A673 (cell line): ENCODE measurements at regions of chr5 and their contacts with region 1.

Region 1: GRCh38 chr5:103119765-103120606 is at the starts of genes GIN1 and PPIP5K2:
- DNase-seq: peak; percentile 99
- H3K4me3 ChIP-seq: peak within 1 kb of the TSS; percentile 78
- H3K27ac ChIP-seq: peak within 1 kb of the TSS; percentile 94
- H3K4me1 ChIP-seq: no peaks in the 10 kb centered on the region
- H3K27me3 ChIP-seq: no peaks in the 10 kb centered on the region
- CTCF ChIP-seq: no peak
- total RNA-seq, gene GIN1: 8.0 and 12.5 TPM in 2 replicates
- total RNA-seq, gene PPIP5K2: 71.8 and 75.6 TPM in 2 replicates

Region 2: GRCh38 chr5:102596113-102596512 is 523.9 kb before region 1 on chr5:
- CTCF ChIA-PET with region 1: no interaction called
- POLR2A ChIA-PET with region 1: no interaction called
- intact Hi-C with region 1: no loop called
- DNase-seq: no peak
- H3K4me3 ChIP-seq: no peak overlapping the region
- H3K27ac ChIP-seq: no peak overlapping the region
- H3K4me1 ChIP-seq: peaks cover 3% of the 10 kb centered on the region
- H3K27me3 ChIP-seq: no peaks in the 10 kb centered on the region
- CTCF ChIP-seq: no peak

Region 3: DNA sequence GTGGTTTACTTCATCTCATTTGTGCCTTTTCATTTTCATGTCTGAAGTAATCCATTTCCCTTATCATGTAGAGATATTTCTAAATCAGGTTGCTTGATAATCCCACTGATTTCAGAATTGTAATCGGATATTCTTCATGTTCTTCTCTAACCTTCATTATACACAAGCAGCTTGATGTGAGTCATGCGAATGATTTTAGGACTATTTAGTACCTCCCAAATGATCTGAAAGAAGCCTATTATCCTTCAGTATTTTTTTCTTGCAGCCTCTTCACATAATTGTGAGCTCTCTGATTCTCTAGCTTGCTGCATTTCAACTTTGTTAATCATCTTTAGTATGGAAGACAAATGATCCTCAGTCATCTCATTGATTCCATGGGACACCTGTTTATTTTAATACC is 182.1 kb before region 1 on chr5:
- CTCF ChIA-PET with region 1: no interaction called
- POLR2A ChIA-PET with region 1: no interaction called
- intact Hi-C with region 1: no loop called
- DNase-seq: peak; percentile 42
- H3K4me3 ChIP-seq: no peak overlapping the region
- H3K27ac ChIP-seq: no peak overlapping the region
- H3K4me1 ChIP-seq: no peaks in the 10 kb centered on the region
- H3K27me3 ChIP-seq: no peaks in the 10 kb centered on the region
- CTCF ChIP-seq: no peak

Region 4: DNA sequence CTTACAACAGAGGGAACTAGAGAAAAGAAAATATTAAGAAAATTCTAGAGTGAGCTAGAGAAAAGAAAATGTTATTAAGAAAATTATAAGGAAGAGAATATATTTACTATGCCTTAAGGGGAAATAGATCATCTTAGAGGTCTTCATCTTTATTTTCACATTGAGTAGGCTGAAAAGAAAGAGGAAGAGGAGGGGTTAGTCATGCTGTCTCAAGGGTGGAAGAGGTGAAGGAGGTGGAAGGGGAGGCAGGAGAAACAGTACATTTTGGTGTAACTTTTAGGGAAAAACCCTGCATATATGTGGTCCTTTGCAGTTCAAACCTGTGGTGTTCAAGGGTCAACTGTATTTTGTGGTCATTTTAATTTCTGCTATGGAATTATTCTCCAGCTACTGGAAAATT is 46.7 kb after region 1 on chr5:
- CTCF ChIA-PET with region 1: no interaction called
- POLR2A ChIA-PET with region 1: no interaction called
- intact Hi-C with region 1: no loop called
- DNase-seq: no peak
- H3K4me3 ChIP-seq: no peak overlapping the region
- H3K27ac ChIP-seq: no peak overlapping the region
- H3K4me1 ChIP-seq: no peaks in the 10 kb centered on the region
- H3K27me3 ChIP-seq: no peaks in the 10 kb centered on the region
- CTCF ChIP-seq: no peak

Region 5: DNA sequence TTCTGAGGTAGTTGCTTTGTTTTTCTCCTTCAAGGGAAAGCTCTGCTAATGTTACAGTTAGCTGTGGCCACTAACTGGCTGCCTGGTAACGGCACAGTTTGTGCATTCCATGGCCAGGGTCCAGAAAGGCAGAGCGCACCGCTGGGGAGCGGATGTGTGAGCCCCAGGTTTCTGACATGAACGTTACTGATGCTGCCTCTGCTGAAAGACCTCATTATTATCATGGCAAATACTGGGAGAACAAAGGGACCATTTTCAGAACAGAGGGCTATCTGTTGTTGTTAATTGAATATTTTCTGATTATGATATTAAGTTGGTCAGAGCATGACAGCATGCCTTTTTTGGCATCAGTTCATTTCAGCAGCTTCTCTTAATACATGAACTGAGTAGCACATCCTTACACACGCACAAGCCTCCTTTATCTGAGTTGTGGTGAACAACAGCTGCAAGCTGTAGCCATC is 308.5 kb after region 1 on chr5:
- CTCF ChIA-PET with region 1: no interaction called
- POLR2A ChIA-PET with region 1: no interaction called
- intact Hi-C with region 1: no loop called
- DNase-seq: peak; percentile 70
- H3K4me3 ChIP-seq: no peak overlapping the region
- H3K27ac ChIP-seq: no peak overlapping the region
- H3K4me1 ChIP-seq: peaks cover 6% of the 10 kb centered on the region
- H3K27me3 ChIP-seq: no peaks in the 10 kb centered on the region
- CTCF ChIP-seq: no peak

Region 6: GRCh38 chr5:103562453-103563157 is 442.6 kb after region 1 on chr5 and contains the start of gene NUDT12:
- CTCF ChIA-PET with region 1: no interaction called
- POLR2A ChIA-PET with region 1: interaction called, 11 read pairs
- intact Hi-C with region 1: no loop called
- DNase-seq: peak; percentile 87
- H3K4me3 ChIP-seq: peak within 1 kb of the TSS; percentile 59
- H3K27ac ChIP-seq: peak within 1 kb of the TSS; percentile 85
- H3K4me1 ChIP-seq: no peaks in the 10 kb centered on the region
- H3K27me3 ChIP-seq: no peaks in the 10 kb centered on the region
- CTCF ChIP-seq: no peak
- total RNA-seq, gene NUDT12: 10.2 and 10.9 TPM in 2 replicates